HepG2 (cell line): ENCODE measurements at regions of chrX and their contacts with region 1.

Region 1: GRCh38 chrX:12901486-12901885 is 4.9 kb upstream of the TLR8 start:
- DNase-seq: peak; percentile 11
- ATAC-seq: peak; percentile 49; the same call in 1 of the 3 replicates
- H3K4me3 ChIP-seq: no peak overlapping the region
- H3K27ac ChIP-seq: no peak overlapping the region
- H3K4me1 ChIP-seq: no peaks in the 10 kb centered on the region
- H3K27me3 ChIP-seq: no peaks in the 10 kb centered on the region
- CTCF ChIP-seq: peak; percentile 67
- EP300 ChIP-seq: no peak
- POLR2A ChIP-seq: no peak
- RAD21 ChIP-seq: peak; percentile 33; the same call in 1 of the 2 replicates

Region 2: GRCh38 chrX:12701628-12702027 is 199.9 kb before region 1 on chrX:
- CTCF ChIA-PET with region 1: no interaction called
- POLR2A ChIA-PET with region 1: no interaction called
- in situ Hi-C with region 1: no loop called
- intact Hi-C with region 1: loop called (anchors 2 kb)
- DNase-seq: peak; percentile 37
- ATAC-seq: peak; percentile 95
- H3K4me3 ChIP-seq: no peak overlapping the region
- H3K27ac ChIP-seq: no peak overlapping the region
- H3K4me1 ChIP-seq: no peaks in the 10 kb centered on the region
- H3K27me3 ChIP-seq: no peaks in the 10 kb centered on the region
- CTCF ChIP-seq: peak; percentile 75
- EP300 ChIP-seq: no peak
- POLR2A ChIP-seq: no peak
- RAD21 ChIP-seq: no peak

Region 3: GRCh38 chrX:12814420-12814819 is 87.1 kb before region 1 on chrX:
- CTCF ChIA-PET with region 1: interaction called, 20 read pairs
- POLR2A ChIA-PET with region 1: no interaction called
- in situ Hi-C with region 1: no loop called
- intact Hi-C with region 1: loop called (anchors 1 kb)
- DNase-seq: peak; percentile 29
- ATAC-seq: peak; percentile 56
- H3K4me3 ChIP-seq: no peak overlapping the region
- H3K27ac ChIP-seq: no peak overlapping the region
- H3K4me1 ChIP-seq: no peaks in the 10 kb centered on the region
- H3K27me3 ChIP-seq: no peaks in the 10 kb centered on the region
- CTCF ChIP-seq: peak; percentile 71
- EP300 ChIP-seq: no peak
- POLR2A ChIP-seq: no peak
- RAD21 ChIP-seq: peak; percentile 71